RWPE1 (cell line): ENCODE measurements at regions of chr1 and their contacts with region 1.

Region 1: DNA sequence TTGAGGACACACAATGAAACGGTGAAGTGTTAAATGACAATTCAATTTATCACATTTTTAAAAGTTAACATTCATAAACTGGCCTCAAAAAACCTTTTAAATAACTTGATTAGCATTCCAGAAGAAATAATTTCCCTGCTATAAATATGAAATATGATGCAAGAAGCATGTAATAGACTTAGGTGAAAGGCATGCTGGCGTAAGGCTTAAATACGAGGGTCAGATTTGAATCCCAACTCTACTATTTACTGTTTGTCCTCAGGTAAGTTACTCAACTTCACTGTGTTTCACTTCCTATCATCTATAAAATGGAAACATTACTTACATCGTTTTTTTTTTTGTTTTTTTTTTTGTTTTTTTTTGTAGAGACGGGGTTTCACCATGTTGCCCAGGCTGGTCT is 40.8 kb downstream of the EPRS1 start:
- DNase-seq: no peak
- H3K27ac ChIP-seq: no peak overlapping the region
- CTCF ChIP-seq: no peak

Region 2: DNA sequence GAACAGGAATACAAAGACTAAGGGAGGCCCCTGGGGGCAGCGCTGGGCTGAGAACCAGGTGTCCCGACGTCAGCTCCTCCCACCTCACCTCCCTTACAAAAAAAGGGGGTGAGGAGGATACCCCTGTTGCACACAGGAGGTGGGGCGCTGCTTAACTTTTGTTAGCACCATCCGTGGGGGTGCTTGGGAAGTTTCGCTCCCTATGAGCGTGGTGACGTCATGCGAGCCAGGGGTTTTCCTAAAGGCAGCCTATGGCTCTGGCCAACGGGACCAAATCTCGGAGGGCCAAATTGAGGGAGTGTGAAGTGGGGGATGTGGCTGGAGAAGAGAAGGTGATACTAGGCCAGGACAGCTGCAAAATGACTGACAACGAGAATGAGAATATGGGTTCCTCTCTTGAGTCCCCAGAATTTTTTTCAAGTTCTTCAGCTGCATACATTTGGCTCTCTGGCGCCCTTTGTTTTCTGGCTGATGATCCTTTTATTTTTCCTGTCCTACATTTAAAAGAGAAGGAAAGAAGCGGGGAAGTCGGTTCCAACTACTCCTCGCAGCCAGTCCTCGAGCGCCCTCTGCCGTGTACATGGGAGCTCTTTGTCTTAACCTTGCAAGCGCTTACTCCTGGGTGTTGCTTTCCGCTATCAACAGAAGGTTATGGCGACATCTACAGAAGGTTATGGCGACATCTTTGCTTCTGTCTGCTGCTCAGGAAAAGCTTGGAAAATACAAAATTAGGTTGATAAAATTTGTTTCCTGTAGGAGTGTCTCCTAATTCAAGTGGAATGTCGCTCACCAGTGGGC is 344.6 kb before region 1 on chr1:
- CTCF ChIA-PET with region 1: no interaction called
- POLR2A ChIA-PET with region 1: no interaction called
- DNase-seq: peak; percentile 82
- H3K27ac ChIP-seq: no peak overlapping the region
- CTCF ChIP-seq: peak; percentile 87

Region 3: DNA sequence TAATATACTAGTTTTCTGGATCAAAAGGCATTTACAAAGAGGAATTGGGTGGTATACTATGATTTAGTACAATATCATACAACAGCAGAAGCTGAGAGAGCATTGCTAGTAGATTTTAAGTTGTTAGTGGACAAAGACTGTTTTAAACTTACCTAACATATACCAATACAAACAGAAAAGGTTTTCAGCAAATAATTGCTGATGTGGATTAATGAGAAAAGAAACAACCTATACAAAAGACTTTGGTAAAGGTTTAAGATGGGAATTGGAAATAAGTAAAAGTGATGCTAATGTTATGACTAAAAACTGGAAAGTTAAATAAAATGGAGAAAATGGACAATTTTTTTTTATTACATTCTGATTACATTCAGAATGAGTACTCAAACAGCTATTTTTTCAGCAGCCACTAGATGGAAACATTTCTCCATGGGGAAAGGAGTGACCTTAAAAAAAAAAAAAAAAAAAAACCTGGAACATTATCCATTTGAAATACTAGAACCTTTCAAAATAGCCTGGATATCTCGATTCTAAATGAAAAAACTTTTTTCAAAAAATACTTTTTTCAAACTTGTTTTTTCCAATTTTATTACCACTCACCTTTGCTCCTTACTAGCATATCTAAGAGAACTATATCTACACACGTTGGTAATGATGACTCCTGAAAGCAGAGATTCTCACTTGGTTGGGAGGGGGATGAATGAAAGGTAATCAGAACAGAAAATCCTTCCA is 14.5 kb before region 1 on chr1:
- CTCF ChIA-PET with region 1: no interaction called
- POLR2A ChIA-PET with region 1: interaction called, 10 read pairs
- DNase-seq: peak; percentile 38
- H3K27ac ChIP-seq: no peak overlapping the region
- CTCF ChIP-seq: peak; percentile 71

Region 4: DNA sequence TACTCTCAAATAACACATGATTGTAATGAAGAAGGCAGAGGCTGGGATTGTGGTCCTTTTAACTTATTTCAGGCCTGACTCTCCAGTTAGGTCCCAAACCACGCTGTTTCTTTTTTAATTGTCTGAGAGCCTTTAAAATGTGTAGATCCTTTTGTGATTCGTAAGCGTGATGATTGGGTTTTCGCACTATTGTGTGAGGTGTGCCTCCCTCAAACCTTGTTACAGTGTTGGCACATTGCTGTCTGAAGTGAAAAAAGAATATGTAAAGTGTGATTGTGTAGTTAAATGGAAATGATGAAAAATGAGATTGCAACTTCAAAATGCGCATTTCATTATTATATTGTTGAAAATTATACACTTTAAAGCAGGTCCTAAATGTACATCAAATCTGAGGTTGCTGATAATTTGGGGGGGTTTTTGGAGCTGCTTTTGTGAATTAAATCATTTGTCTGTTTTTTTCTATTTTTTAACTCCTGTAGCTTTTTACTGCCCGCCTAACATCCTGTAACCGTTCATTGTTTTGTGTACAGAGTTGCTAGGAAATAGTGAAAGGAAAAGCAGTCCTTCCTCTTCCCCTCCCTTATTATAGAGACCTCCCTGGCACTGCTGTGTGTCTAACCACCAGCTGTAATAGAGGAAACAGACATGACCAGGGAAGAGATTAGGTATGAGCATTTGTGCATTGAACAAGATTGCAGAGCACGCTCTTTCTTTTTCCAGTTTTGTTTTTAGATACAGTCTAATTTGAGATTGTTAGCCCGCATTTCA is 131.7 kb after region 1 on chr1:
- CTCF ChIA-PET with region 1: no interaction called
- POLR2A ChIA-PET with region 1: no interaction called
- DNase-seq: no peak
- H3K27ac ChIP-seq: no peak overlapping the region
- CTCF ChIP-seq: no peak